Mammary epithelial cell (primary cell): ENCODE measurements at regions of chr1 and their contacts with region 1.

Region 1: DNA sequence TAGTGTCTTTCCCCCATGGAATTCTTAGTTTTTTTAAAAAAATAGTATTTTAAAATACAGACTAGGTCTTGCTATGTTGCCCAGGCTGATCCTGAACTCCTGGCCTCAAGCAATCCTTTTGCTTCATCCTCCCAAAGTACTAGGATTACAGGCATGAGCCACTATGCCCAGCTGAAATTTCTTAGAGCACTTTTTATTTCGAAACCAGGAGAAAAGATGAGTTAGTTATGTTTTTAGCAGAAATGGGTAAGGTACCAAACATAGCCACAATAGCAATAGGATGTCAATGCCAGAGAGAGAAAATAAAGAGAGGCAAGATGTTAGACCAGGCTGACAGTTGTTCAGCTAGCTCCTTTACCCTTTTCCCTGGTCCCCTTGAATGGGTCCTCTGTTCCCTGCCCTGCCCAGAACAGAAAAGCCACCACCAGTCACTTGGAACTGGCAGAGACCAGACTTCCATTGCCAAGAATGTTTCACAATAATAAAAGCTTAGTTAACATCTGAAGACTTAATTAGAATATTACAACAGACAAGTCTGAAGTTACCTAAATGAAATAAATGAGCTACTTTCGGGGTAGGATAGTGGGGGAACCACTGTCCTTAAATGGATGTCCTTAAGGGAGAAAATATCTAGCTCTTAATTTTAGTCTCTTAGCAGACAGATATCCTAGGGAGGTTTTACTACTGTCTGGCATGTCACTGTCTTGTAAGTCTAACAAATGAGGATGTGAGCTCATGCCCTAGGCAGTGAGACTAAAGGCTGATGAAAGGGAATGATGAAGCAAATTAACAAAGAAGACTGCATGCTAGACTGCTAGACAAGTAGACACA is 54.3 kb downstream of the ABL2 start:
- DNase-seq: peak; percentile 81
- H3K4me3 ChIP-seq: no peak overlapping the region
- H3K27ac ChIP-seq: peak overlapping the region; percentile 75
- H3K4me1 ChIP-seq: peaks cover 24% of the 10 kb centered on the region
- H3K27me3 ChIP-seq: no peaks in the 10 kb centered on the region
- CTCF ChIP-seq: no peak

Region 2: GRCh38 chr1:179142889-179143299 is 32.3 kb before region 1 on chr1:
- CTCF ChIA-PET with region 1: interaction called, 7 read pairs
- dilution Hi-C with region 1: no loop called
- in situ Hi-C with region 1: no loop called
- intact Hi-C with region 1: loop called (anchors 1 kb)
- DNase-seq: peak; percentile 97
- H3K4me3 ChIP-seq: peak overlapping the region; percentile 68 to 100 (median 82)
- H3K27ac ChIP-seq: peak overlapping the region; percentile 100
- H3K4me1 ChIP-seq: peaks cover 30% of the 10 kb centered on the region
- H3K27me3 ChIP-seq: no peaks in the 10 kb centered on the region
- CTCF ChIP-seq: no peak